Panc1 (cell line): ENCODE measurements at regions of chr4 and their contacts with region 1.

Region 1: DNA sequence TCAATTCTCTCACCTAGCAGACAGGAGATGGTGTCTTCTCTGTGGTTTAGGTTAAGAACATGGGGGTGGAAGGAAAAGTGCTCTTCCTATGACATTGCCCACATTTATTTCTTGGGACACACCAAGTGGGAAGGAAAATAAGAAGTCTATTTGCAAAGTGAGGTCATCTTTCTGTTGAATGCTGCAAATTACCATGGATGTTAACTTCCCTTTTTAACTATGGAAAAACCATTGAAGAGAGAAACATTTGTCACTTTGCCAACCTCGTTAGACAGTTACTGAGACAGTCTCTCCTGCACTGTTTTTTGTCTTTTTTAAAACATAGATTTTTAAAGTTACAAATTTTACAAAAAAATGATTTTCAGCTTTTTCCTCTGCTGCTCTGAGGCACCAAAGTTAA is 72.8 kb upstream of the BEND4 start:
- DNase-seq: no peak
- ATAC-seq: no peak
- H3K4me3 ChIP-seq: no peak overlapping the region
- H3K27ac ChIP-seq: no peak overlapping the region
- H3K4me1 ChIP-seq: no peaks in the 10 kb centered on the region
- H3K27me3 ChIP-seq: no peaks in the 10 kb centered on the region
- CTCF ChIP-seq: no peak

Region 2: DNA sequence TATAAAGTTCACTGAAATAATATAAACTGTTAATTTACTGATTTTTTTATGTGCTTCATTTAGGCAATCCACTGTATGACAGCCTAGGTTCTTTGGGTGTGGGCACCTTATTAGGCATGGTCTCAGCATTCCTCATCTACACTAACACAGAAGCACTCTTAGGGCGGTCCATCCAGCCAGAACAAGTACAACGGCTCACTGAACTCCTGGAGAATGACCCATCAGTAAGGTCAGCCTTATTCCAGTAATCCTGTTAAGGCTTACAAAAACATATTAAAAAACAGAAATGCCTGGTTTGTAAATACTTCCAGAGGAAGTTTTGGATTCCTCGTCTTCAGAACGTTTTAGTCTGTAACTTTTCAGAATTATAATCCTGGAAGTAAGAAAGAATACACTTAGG is 154.8 kb before region 1 on chr4:
- CTCF ChIA-PET with region 1: no interaction called
- POLR2A ChIA-PET with region 1: no interaction called
- in situ Hi-C with region 1: no loop called
- intact Hi-C with region 1: no loop called
- DNase-seq: no peak
- ATAC-seq: no peak
- H3K4me3 ChIP-seq: no peak overlapping the region
- H3K27ac ChIP-seq: no peak overlapping the region
- H3K4me1 ChIP-seq: no peaks in the 10 kb centered on the region
- H3K27me3 ChIP-seq: no peaks in the 10 kb centered on the region
- CTCF ChIP-seq: no peak

Region 3: GRCh38 chr4:42119886-42120285 is 105.4 kb before region 1 on chr4:
- CTCF ChIA-PET with region 1: no interaction called
- POLR2A ChIA-PET with region 1: no interaction called
- in situ Hi-C with region 1: no loop called
- intact Hi-C with region 1: loop called (anchors 5 kb)
- DNase-seq: no peak
- ATAC-seq: no peak
- H3K4me3 ChIP-seq: no peak overlapping the region
- H3K27ac ChIP-seq: no peak overlapping the region
- H3K4me1 ChIP-seq: no peaks in the 10 kb centered on the region
- H3K27me3 ChIP-seq: 0 out of 2 replicates have a peak, but pooled peaks cover 10% of the 10 kb centered on the region
- CTCF ChIP-seq: no peak

Region 4: DNA sequence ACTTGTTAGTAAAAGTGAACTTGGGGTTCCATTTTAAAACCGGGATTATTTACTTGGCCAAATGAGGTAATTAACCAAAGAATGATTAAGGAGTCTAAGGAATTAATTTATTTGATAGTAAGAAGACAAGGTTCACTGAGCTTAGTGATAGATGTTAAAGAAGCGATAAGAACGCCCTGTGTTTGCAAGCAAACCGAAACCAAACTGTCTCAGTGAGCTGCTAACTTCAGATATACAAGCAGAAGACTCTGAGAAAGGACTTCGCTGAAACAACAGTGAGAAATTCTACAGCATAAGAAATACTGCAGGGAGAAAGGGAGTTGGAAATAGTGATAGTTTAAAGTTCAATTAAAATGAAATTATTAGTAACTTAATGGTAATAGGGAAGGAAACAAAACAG is 134.4 kb after region 1 on chr4:
- CTCF ChIA-PET with region 1: no interaction called
- POLR2A ChIA-PET with region 1: no interaction called
- in situ Hi-C with region 1: no loop called
- intact Hi-C with region 1: no loop called
- DNase-seq: no peak
- ATAC-seq: no peak
- H3K4me3 ChIP-seq: no peak overlapping the region
- H3K27ac ChIP-seq: no peak overlapping the region
- H3K4me1 ChIP-seq: no peaks in the 10 kb centered on the region
- H3K27me3 ChIP-seq: peaks cover 4% of the 10 kb centered on the region
- CTCF ChIP-seq: no peak

Region 5: GRCh38 chr4:42460043-42460442 is 234.8 kb after region 1 on chr4:
- CTCF ChIA-PET with region 1: no interaction called
- POLR2A ChIA-PET with region 1: no interaction called
- in situ Hi-C with region 1: no loop called
- intact Hi-C with region 1: no loop called
- DNase-seq: no peak
- ATAC-seq: no peak
- H3K4me3 ChIP-seq: no peak overlapping the region
- H3K27ac ChIP-seq: no peak overlapping the region
- H3K4me1 ChIP-seq: no peaks in the 10 kb centered on the region
- H3K27me3 ChIP-seq: no peaks in the 10 kb centered on the region
- CTCF ChIP-seq: no peak